Activated CD4-positive, alpha-beta memory T cell treated with anti-CD3 and anti-CD28 coated beads for 36 hours (primary cell): ENCODE measurements at regions of chr3 and their contacts with region 1.

Region 1: DNA sequence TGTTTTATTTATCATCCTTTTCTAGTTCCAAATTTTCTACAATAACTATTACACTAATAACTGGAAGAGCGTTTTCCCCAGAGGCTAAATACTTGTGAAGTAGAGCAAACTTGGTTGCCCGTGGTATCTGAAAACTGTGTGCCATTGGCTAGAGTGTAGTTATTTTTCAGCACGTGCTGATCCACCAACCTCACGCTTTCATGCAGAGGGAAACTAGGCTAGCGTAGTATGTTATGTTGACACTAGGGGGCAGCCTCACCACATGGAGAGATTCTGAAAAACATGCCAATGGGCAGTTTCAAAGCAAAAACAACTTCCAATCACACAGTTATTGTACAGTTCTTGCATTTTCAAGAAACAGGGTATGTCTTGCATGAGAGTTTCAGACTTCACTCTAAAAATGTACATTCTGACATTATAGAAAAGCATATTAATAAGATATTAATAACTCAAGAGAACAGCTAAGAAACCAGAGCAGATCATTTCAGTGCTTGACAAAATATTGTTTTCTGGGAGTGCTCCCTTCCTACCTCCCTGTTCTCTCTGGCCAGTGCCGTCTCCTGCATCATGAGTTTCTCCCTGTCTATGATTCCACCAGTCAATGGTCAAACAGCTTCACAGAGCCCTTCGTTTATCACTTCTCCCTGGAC is 39.7 kb downstream of the SPATA12 start:
- DNase-seq: peak; percentile 73
- H3K4me3 Mint-ChIP-seq: no peak overlapping the region
- H3K27ac Mint-ChIP-seq: no peak overlapping the region
- H3K4me1 Mint-ChIP-seq: peaks cover 2% of the 10 kb centered on the region
- H3K27me3 Mint-ChIP-seq: no peaks in the 10 kb centered on the region

Region 2: GRCh38 chr3:57112206-57112605 is 12.0 kb after region 1 on chr3:
- CTCF ChIA-PET with region 1: interaction called, 17 read pairs
- POLR2A ChIA-PET with region 1: no interaction called
- intact Hi-C with region 1: no loop called
- DNase-seq: no peak
- H3K4me3 Mint-ChIP-seq: no peak overlapping the region
- H3K27ac Mint-ChIP-seq: no peak overlapping the region
- H3K4me1 Mint-ChIP-seq: peaks cover 5% of the 10 kb centered on the region
- H3K27me3 Mint-ChIP-seq: peaks cover 6% of the 10 kb centered on the region

Region 3: DNA sequence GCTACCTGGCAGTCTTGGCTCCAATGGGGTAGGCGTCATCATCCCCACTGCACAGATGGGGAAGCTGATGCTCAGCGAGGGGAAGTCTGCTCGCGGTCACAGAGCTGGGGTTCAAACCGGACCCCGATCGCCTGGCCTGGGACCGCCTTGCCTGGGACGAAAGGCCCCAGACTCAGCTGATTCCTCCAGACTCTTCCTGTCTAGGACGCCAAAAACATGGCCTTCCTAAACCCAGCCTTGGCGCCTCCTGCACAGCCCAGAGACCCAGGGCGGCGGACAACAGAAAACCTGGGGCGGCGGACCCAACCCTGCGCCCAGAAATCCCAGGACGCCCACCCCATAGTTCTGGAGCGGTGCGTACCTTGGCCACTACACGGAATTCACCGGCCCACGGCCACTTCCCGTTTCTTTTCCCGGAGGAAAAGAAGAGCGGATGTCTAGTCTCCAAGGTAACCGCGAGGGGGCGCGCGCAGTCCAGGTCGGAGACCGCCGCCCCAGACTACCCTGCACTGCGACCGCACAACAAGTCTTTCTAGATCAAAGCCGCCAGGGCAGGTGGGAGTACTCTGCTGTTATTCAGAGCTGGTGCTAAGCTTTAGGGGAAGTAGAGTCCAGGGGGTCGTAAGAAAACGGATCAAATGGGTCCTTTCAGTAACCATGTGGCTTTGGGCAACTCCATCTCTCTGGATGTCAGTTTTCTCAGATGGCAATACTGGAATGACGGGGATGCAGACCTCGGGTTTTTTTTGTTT is 69.9 kb after region 1 on chr3:
- CTCF ChIA-PET with region 1: interaction called, 4 read pairs
- POLR2A ChIA-PET with region 1: no interaction called
- intact Hi-C with region 1: loop called (anchors 5 kb)
- DNase-seq: peak; percentile 75
- H3K4me3 Mint-ChIP-seq: peak overlapping the region; percentile 57
- H3K27ac Mint-ChIP-seq: no peak overlapping the region
- H3K4me1 Mint-ChIP-seq: peaks cover 4% of the 10 kb centered on the region
- H3K27me3 Mint-ChIP-seq: peaks cover 47% of the 10 kb centered on the region